PC-9 (cell line): ENCODE measurements at regions of chr2 and their contacts with region 1.

Region 1: GRCh38 chr2:230691005-230691647 is 21.5 kb upstream of the CAB39 start:
- DNase-seq: peak; percentile 83 to 99
- H3K4me3 ChIP-seq: no peak overlapping the region
- H3K27ac ChIP-seq: peak overlapping the region; percentile 84
- H3K4me1 ChIP-seq: peaks cover 97% of the 10 kb centered on the region
- H3K27me3 ChIP-seq: no peaks in the 10 kb centered on the region
- CTCF ChIP-seq: no peak

Region 2: DNA sequence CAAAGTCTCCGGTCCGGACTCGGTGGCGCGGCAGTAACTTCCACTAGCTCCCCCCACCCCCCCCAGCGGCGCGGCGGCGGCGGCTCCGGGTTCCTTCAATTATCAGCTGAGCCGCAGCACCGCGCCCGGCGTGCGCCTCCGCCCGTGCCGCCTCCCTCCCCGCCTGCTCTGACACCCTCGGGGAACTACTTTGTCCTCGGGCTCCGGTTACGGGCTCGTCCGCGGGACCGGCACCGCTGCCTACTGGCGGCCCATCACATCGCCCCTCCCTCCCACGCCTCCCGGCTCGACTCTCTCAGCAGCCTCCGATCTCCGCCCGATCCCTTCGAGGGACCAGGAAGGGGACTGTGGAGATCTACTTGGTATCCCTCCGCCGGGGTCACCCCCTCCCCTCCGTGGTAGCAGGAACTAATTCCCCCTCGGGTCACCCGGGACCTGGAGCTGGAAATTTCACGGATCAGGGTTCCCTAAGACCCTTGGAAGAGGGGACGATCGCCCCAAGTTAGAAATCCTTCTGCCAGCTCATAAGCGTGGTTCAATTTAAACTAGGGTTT is 769.2 kb before region 1 on chr2 and contains the start of gene TRIP12:
- CTCF ChIA-PET with region 1: no interaction called
- POLR2A ChIA-PET with region 1: no interaction called
- intact Hi-C with region 1: loop called (anchors 5 kb)
- DNase-seq: peak; percentile 88 to 92
- H3K4me3 ChIP-seq: peak within 1 kb of the TSS; percentile 94
- H3K27ac ChIP-seq: peak within 1 kb of the TSS; percentile 80
- H3K4me1 ChIP-seq: peaks cover 19% of the 10 kb centered on the region
- H3K27me3 ChIP-seq: no peaks in the 10 kb centered on the region
- CTCF ChIP-seq: no peak
- total RNA-seq, gene TRIP12: 139 and 226 TPM in 2 replicates

Region 3: DNA sequence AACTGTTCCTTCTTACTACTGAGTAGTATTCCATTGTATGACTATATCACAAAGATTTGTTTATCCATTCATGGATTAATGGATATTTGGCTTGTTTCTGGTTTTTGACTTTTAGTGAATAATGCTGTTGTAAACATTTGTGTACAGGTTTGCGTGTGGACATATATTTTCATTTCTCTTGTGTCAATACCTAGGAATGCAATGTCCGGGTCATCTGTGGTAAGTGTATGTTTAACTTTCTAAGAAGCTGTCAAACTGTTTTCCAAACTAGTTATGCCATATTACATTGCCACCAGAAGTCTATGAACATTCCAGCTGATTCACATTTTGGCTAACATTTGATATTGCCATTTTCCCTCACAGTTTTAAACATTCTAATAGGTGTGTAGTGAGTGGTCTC is 593.3 kb before region 1 on chr2:
- CTCF ChIA-PET with region 1: no interaction called
- POLR2A ChIA-PET with region 1: no interaction called
- intact Hi-C with region 1: no loop called
- DNase-seq: no peak
- H3K4me3 ChIP-seq: no peak overlapping the region
- H3K27ac ChIP-seq: no peak overlapping the region
- H3K4me1 ChIP-seq: no peaks in the 10 kb centered on the region
- H3K27me3 ChIP-seq: no peaks in the 10 kb centered on the region
- CTCF ChIP-seq: no peak

Region 4: GRCh38 chr2:230627806-230628724 is 63.1 kb before region 1 on chr2:
- CTCF ChIA-PET with region 1: no interaction called
- POLR2A ChIA-PET with region 1: interaction called, 11 read pairs
- intact Hi-C with region 1: no loop called
- DNase-seq: no peak
- H3K4me3 ChIP-seq: no peak overlapping the region
- H3K27ac ChIP-seq: no peak overlapping the region
- H3K4me1 ChIP-seq: no peaks in the 10 kb centered on the region
- H3K27me3 ChIP-seq: no peaks in the 10 kb centered on the region
- CTCF ChIP-seq: no peak

Region 5: GRCh38 chr2:230658877-230659652 is 32.1 kb before region 1 on chr2:
- CTCF ChIA-PET with region 1: no interaction called
- POLR2A ChIA-PET with region 1: interaction called, 10 read pairs
- intact Hi-C with region 1: no loop called
- DNase-seq: no peak
- H3K4me3 ChIP-seq: no peak overlapping the region
- H3K27ac ChIP-seq: no peak overlapping the region
- H3K4me1 ChIP-seq: peaks cover 5% of the 10 kb centered on the region; the same call in 1 of the 2 replicates
- H3K27me3 ChIP-seq: no peaks in the 10 kb centered on the region
- CTCF ChIP-seq: no peak

Region 6: GRCh38 chr2:230781130-230781797 is 90.1 kb after region 1 on chr2:
- CTCF ChIA-PET with region 1: no interaction called
- POLR2A ChIA-PET with region 1: interaction called, 6 read pairs
- intact Hi-C with region 1: loop called (anchors 1 kb)
- DNase-seq: peak; percentile 80 to 98
- H3K4me3 ChIP-seq: peak overlapping the region; percentile 32; the same call in 1 of the 2 replicates
- H3K27ac ChIP-seq: peak overlapping the region; percentile 91
- H3K4me1 ChIP-seq: peaks cover 63% of the 10 kb centered on the region
- H3K27me3 ChIP-seq: no peaks in the 10 kb centered on the region
- CTCF ChIP-seq: no peak